ENCODE measurements at regions of chr9 and their contacts with region 1.

Region 1: GRCh38 chr9:128735373-128735772 is 11.4 kb upstream of the ZDHHC12 start:
- DNase-seq: no peak
- H3K4me3 ChIP-seq: no peak overlapping the region
- H3K27ac ChIP-seq: no peak overlapping the region
- H3K4me1 ChIP-seq: no peaks in the 10 kb centered on the region
- H3K27me3 ChIP-seq: no peaks in the 10 kb centered on the region
- CTCF ChIP-seq: no peak

Region 2: DNA sequence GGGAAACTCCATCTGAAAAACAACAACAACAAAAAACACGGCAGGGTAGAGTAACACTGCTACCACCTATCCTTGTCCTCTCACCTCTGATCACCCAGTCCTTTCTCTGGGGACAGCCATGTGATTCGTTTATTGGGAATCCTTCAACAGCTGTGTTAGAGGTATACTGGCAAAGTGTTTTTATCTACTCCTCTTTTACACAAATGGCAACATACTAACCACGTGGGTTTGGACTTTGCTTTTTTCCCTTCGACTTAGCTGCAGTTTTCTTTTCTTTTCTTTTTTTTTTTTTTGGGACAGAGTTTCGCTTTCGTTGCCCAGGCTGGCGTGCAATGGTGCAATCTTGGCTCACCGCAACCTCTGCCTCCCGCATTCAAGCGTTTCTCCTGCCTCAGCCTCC is 57.6 kb before region 1 on chr9:
- intact Hi-C with region 1: no loop called
- DNase-seq: no peak
- H3K4me3 ChIP-seq: no peak overlapping the region
- H3K27ac ChIP-seq: no peak overlapping the region
- H3K4me1 ChIP-seq: no peaks in the 10 kb centered on the region
- H3K27me3 ChIP-seq: no peaks in the 10 kb centered on the region
- CTCF ChIP-seq: no peak

Region 3: GRCh38 chr9:128714586-128715435 is 20.6 kb before region 1 on chr9:
- intact Hi-C with region 1: loop called (anchors 2 kb)
- DNase-seq: peak in 1 of 2 donors; percentile 51
- H3K4me3 ChIP-seq: no peak overlapping the region
- H3K27ac ChIP-seq: no peak overlapping the region
- H3K4me1 ChIP-seq: no peaks in the 10 kb centered on the region
- H3K27me3 ChIP-seq: no peaks in the 10 kb centered on the region
- CTCF ChIP-seq: no peak